ENCODE measurements at regions of chr11 and their contacts with region 1.

Region 1: DNA sequence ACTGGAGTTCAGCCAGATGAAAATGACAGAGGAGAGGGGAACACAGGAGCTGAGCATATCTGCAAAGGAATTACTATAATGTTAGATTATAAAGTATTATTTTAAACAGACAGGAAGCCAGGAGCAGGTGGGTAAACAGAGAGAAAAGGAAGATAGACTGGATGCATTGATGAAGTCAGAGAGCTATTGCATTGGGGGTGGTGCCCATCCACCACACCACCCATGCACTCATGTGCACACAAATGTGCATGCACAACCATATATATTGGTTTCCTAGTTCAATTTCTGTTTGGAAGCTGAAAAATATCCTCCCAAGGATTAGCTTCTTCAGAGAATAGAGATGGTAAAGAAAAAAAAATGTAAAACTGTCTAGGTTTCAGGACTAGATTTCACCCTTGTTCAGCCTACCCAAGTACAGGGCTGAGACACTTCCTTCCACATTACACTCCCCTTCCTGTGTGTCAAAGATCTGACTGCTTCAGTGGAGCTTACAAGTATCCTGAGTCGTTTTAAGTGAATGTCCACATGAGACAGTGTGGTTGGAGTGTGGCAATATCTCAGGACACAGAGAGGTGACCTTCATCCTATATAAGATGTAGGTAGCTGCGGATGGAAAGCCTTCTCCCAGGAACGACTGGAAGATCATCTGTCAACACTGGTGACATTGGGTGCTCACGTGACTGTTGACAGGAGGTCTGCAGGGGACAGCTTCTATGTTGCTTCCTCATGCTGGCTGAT is 12.2 kb upstream of the SMPD1 start:
- DNase-seq: no peak
- H3K4me3 ChIP-seq: no peak overlapping the region
- H3K27ac ChIP-seq: no peak overlapping the region
- H3K4me1 ChIP-seq: peaks cover 29% of the 10 kb centered on the region
- H3K27me3 ChIP-seq: no peaks in the 10 kb centered on the region
- CTCF ChIP-seq: no peak

Region 2: DNA sequence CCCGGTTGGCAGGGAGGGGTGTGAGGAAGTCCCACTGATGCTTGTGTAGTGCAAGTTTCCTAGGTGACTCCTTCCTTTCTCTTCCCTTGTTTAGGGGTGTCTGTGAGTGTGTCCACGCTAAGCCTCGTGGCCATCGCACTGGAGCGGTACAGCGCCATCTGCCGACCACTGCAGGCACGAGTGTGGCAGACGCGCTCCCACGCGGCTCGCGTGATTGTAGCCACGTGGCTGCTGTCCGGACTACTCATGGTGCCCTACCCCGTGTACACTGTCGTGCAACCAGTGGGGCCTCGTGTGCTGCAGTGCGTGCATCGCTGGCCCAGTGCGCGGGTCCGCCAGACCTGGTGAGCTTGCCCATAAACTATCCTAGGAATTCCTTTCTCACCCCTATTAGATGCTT is 108.1 kb before region 1 on chr11:
- CTCF ChIA-PET with region 1: interaction called, 11 read pairs
- POLR2A ChIA-PET with region 1: no interaction called
- intact Hi-C with region 1: no loop called
- DNase-seq: no peak
- H3K4me3 ChIP-seq: no peak overlapping the region
- H3K27ac ChIP-seq: no peak overlapping the region
- H3K4me1 ChIP-seq: no peaks in the 10 kb centered on the region
- H3K27me3 ChIP-seq: peaks cover 1% of the 10 kb centered on the region
- CTCF ChIP-seq: peak; percentile 26; the same call in 1 of the 2 replicates

Region 3: DNA sequence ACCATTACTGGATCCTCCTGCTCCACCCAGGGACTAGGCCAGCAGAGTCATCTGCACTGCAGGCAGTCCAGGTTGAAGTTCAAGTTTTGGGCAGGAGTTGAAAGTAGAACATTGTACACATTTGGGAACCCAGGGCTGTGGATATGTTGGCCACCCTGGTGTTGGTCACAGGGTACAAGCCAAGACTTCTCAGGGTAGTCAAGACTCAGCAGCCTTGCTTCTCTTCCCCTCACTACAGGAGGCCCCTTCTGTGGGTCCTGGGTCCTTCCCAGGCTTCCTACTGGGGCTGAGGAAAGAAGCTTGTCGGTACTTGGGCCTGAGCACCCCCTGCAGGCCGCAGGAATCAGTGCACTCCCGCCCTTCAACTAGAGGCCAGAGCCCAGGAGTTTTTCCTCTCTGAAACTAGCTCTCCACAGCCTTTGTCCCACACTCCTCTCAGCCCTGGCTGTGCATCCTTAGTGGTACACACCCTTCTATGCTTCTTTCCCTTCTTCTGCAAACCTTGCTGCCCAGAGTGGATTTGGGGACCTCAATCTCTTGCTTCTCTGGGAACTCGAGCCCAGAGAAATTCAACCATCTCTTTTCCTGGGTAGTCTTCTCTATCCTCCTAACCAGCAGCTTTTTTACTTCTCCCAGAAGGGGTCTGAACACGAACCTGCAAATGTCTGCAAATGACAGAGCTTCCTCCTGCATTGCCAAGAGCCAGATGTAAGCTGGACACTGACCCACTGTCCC is 65.4 kb after region 1 on chr11:
- CTCF ChIA-PET with region 1: interaction called, 25 read pairs
- POLR2A ChIA-PET with region 1: no interaction called
- intact Hi-C with region 1: loop called (anchors 1 kb)
- DNase-seq: peak; percentile 79
- H3K4me3 ChIP-seq: no peak overlapping the region
- H3K27ac ChIP-seq: peak overlapping the region; percentile 40
- H3K4me1 ChIP-seq: peaks cover 4% of the 10 kb centered on the region
- H3K27me3 ChIP-seq: no peaks in the 10 kb centered on the region
- CTCF ChIP-seq: peak; percentile 87

Region 4: DNA sequence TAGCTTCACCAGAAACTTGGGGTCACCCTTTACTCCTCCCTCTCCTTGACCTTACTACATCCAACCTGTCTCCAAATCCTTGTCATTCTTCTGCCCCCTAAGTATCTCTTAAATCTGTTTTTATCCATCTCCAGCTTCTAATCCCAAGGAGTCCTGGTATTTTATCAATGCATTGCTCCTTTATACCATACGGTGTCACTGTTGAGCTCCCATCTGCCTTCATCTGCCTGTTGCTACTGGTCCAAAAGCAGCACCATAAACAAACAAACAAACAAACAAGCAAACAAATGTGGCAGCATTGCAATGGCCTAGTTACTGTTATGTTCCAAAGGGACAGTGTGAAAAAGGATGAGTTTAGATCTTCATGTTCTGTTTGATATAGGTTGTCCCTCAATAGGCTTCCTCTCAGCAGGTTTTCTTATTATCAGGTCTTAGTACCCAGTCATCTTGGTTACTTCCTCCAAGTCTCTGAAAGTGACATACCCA is 153.2 kb after region 1 on chr11:
- CTCF ChIA-PET with region 1: interaction called, 10 read pairs
- POLR2A ChIA-PET with region 1: no interaction called
- intact Hi-C with region 1: no loop called
- DNase-seq: peak; percentile 54
- H3K4me3 ChIP-seq: no peak overlapping the region
- H3K27ac ChIP-seq: no peak overlapping the region
- H3K4me1 ChIP-seq: no peaks in the 10 kb centered on the region
- H3K27me3 ChIP-seq: no peaks in the 10 kb centered on the region
- CTCF ChIP-seq: peak; percentile 78

Region 5: DNA sequence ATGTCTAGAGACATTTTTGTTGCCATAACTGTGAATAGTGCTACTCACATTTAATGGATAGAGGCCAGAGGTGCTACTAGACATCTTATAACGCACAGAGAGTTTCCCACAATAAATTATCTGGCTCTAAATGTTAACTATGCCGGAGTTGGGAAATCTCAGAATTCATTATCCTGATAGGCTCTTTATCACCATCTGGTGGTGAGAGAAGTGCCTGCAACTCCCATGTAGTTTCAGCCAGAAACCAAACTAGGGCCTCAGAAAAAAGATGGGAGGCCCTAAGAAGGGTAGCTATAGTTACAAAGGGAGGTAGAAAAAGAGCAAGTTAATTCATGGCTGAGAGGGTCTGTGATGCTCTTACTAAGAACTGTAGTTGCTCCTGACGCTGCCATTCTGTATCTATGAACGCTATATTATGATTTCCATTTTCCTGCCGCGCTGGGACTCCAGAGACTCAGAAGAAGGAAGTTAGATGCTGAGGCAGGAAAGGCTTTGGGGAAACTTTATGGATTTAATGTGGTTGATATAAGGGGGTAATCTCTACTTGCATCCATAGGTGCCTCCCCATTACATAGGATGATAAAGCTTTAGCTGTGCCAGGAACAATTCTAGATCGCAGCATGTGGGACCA is 327.9 kb after region 1 on chr11:
- CTCF ChIA-PET with region 1: interaction called, 4 read pairs
- POLR2A ChIA-PET with region 1: no interaction called
- intact Hi-C with region 1: loop called (anchors 1 kb)
- DNase-seq: peak; percentile 77
- H3K4me3 ChIP-seq: no peak overlapping the region
- H3K27ac ChIP-seq: no peak overlapping the region
- H3K4me1 ChIP-seq: peaks cover 13% of the 10 kb centered on the region
- H3K27me3 ChIP-seq: no peaks in the 10 kb centered on the region
- CTCF ChIP-seq: peak; percentile 86